Head of caudate nucleus (tissue), 42 donors: ENCODE measurements at regions of chr10 and their contacts with region 1.

Region 1: DNA sequence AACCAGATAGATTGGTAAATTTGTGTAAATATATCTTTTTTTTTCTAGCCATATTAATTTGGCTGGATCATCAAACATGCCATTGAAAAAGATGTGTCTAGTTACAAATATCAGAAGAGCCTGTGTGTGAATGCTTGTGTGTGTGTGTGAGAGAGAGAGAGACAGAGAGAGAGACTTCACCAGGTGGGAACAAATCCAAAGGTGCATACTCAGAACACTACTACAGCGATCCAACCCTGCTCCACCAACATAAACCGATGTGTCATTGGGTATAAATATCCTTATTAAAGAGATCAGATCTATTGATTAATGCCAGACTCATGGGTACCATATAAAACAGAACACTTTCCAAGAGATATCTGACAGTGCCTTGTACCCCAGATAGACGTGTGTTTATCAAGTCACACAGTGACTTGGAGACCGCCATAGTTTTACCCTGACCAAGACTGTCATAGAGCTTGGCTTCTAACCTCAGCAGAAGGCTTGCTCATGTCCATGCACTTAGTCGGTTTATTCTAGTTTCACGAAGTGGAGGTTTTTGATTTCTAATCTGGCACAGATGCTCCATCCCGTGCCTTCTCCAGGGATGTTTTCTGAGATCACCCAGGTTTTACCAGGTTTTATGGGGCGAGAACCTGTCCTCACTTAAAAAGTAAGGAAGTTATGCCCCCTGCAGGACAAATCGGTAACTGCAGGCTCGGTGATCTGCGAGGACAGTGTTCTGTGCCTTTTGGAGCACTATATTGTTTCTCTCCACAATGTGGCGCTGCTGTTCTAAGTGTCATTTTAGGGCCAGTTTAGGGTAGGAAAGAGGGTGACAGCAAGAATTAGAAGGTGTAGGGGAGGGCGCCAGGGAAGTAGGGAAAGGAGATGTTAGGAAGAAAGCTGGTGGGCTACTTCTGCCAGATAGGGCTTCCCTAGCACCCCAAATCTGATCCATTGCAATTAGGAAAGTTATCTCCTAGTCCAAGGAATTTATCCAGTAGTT is 29.3 kb upstream of the WNT8B start:
- DNase-seq: peak; percentile 59 to 99 (median 96)

Region 2: GRCh38 chr10:100303724-100304319 is 129.7 kb before region 1 on chr10:
- intact Hi-C with region 1: loop called (anchors 5 kb)
- DNase-seq: peak in 4 of 42 donors; percentile 12 to 49 (median 30)

Region 3: GRCh38 chr10:100341953-100342626 is 91.5 kb before region 1 on chr10:
- intact Hi-C with region 1: loop called (anchors 5 kb)
- DNase-seq: peak in 37 of 42 donors; percentile 23 to 83 (median 61)

Region 4: GRCh38 chr10:101012525-101013364 is 579.2 kb after region 1 on chr10:
- intact Hi-C with region 1: no loop called
- DNase-seq: peak; percentile 86 to 99 (median 96)